Endothelial cell of umbilical vein (primary cell): ENCODE measurements at regions of chr17 and their contacts with region 1.

Region 1: DNA sequence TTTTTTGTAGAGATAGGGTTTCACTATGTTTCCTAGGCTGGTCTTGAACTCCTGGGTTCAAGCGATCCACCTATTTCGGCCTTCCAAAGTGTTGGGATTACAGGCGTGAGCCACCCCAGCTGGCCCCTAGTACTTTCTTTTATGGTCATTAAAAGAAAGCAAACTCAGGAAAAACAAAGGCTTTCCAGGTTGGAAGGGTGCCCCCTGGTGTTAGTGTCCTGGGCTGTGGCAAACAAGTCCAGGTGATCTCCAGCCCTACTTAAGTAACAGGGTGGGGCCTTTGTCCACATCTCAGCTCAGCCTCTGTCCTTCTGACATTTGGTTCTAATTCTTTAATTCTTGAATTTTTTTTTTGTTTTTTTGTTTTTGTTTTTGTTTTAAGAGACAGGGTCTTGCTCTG is 6.9 kb downstream of the IGFBP4 start:
- DNase-seq: peak; percentile 65
- H3K4me3 ChIP-seq: no peak overlapping the region
- H3K27ac ChIP-seq: no peak overlapping the region
- H3K4me1 ChIP-seq: peaks cover 53% of the 10 kb centered on the region
- H3K27me3 ChIP-seq: no peaks in the 10 kb centered on the region
- CTCF ChIP-seq: peak; percentile 64 to 75
- POLR2A ChIP-seq: no peak

Region 2: GRCh38 chr17:40536295-40537171 is 86.4 kb after region 1 on chr17:
- CTCF ChIA-PET with region 1: interaction called, 110 read pairs
- POLR2A ChIA-PET with region 1: interaction called, 5 read pairs
- dilution Hi-C with region 1: no loop called
- intact Hi-C with region 1: no loop called
- DNase-seq: peak; percentile 91
- H3K4me3 ChIP-seq: no peak overlapping the region
- H3K27ac ChIP-seq: peak overlapping the region; percentile 70
- H3K4me1 ChIP-seq: peaks cover 43% of the 10 kb centered on the region
- H3K27me3 ChIP-seq: no peaks in the 10 kb centered on the region
- CTCF ChIP-seq: no peak
- POLR2A ChIP-seq: peak; percentile 53